HEK293T (cell line): ENCODE measurements at regions of chr3 and their contacts with region 1.

Region 1: GRCh38 chr3:149566292-149566975 is 91.4 kb downstream of the WWTR1 start:
- DNase-seq: no peak

Region 2: GRCh38 chr3:149536429-149536828 is 30.0 kb before region 1 on chr3:
- CTCF ChIA-PET with region 1: interaction called, 11 read pairs
- POLR2A ChIA-PET with region 1: no interaction called
- DNase-seq: no peak